ENCODE measurements at regions of chr19 and their contacts with region 1.

Region 1: GRCh38 chr19:11293433-11294389 is 2.2 kb upstream of the TSPAN16 start:
- DNase-seq: peak; percentile 37
- H3K4me3 ChIP-seq: peak overlapping the region; percentile 42
- CTCF ChIP-seq: peak; percentile 99

Region 2: DNA sequence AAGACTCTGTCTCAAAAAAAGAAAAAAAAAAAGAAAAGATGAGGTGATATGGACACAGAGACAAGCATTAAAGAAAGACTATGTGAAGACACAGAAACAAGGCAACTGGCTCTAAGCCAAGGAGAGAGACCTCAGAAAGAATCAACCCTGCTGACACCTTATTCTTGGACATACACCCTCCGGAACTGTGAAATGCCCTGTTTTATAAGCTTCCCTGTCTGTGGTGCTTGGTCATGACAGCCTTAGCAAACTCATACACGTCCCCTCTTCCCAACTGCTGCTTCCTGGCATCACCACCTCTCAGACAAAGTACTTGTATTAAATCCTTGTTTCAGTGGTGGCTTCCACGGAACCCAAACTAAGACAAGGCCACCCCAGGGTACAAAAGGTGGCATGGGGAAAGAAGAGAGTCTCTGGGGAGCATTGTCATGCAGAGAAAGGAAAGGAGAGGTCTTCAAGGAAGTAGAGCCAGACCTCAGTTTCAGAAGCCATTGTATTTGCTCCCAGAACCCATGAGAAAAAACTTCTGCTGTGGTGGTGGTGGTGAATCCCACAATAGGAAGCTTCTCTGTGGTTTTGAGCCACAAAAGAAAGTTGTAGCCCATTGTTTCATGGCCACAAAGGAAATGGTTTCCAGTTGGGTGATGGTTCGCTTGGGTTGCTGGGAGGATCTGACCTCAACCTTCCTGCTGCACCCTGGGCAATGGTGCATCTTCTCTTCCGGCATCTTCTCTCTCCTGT is 14.0 kb before region 1 on chr19:
- CTCF ChIA-PET with region 1: interaction called, 10 read pairs
- POLR2A ChIA-PET with region 1: no interaction called
- DNase-seq: no peak
- H3K4me3 ChIP-seq: no peak overlapping the region
- CTCF ChIP-seq: no peak

Region 3: GRCh38 chr19:11374433-11375142 is 80.9 kb after region 1 on chr19 and contains the start of gene SWSAP1:
- CTCF ChIA-PET with region 1: interaction called, 18 read pairs
- POLR2A ChIA-PET with region 1: no interaction called
- DNase-seq: peak; percentile 94
- H3K4me3 ChIP-seq: peak within 1 kb of the TSS; percentile 65
- CTCF ChIP-seq: no peak

Region 4: DNA sequence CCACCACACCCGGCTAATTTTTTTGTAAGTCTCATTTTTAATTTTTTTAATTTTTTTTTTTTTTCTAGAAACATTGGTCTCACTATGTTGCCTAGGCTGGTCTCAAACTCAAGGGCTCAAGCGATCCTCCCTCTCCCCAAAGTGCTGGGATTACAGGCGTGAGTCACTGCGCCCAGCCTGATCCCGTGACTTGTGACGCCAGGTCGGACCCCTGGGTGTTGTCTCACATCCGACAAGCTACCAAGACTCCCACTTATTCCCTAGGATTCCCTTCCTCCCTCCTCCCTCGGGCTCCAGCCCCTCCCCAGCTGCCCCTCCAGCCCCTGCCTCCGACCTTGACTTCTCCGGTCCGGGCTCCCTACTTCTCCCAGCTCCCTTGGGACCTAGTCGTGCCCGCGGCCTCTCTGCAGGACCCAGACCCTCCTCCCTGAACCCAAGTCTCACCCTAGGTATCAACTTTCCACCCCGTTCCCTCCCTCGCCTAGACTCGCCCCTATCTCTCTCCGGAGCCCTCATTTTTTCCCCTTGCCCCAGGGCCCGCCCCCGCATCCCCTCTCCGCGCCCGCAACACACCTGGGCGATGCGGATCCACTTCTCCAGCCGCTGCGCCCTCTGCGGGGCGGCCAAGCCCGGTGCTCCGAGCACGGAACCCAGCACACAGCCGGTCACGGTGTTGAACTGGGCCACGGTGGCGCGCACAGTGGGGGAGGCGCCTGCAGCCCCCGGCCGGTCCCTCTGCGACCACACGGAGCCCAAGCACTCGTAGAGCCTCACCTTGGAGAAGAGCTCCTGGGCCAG is 112.3 kb after region 1 on chr19:
- CTCF ChIA-PET with region 1: interaction called, 18 read pairs
- POLR2A ChIA-PET with region 1: no interaction called
- DNase-seq: no peak
- H3K4me3 ChIP-seq: no peak overlapping the region
- CTCF ChIP-seq: peak; percentile 58

Region 5: DNA sequence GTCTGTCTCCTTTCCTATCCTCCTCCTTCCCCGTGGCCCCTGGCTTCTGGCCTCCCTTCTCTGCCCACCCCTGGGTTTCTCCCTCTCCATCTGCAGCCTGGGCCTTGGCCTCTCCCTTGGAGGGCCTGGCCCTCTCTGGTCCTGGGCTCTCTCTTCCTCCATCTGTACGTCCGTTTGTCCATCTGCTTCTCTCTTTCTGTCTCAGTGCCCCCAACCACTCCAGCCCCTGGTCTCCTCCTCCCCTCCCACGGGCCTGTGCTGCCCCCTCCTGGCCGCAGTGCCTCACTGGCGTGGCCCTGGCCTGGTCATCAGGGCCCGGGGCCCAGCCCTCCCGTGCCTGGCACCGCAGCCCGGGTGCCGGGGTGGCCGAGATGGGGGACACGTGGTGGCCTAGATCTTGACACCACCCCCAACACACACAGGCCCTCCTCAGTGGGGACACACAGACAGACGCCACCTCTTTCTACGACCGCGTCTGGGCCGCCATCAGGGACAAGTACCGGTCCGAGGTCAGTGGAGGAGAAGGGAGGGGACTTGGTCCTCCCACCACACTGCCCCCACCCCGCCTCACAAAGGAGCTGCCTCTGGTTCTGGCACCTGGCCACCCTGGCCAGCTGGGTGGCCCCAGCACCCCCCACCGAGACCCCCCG is 153.1 kb after region 1 on chr19:
- CTCF ChIA-PET with region 1: interaction called, 18 read pairs
- POLR2A ChIA-PET with region 1: no interaction called
- DNase-seq: no peak
- H3K4me3 ChIP-seq: no peak overlapping the region
- CTCF ChIP-seq: peak; percentile 84

Region 6: DNA sequence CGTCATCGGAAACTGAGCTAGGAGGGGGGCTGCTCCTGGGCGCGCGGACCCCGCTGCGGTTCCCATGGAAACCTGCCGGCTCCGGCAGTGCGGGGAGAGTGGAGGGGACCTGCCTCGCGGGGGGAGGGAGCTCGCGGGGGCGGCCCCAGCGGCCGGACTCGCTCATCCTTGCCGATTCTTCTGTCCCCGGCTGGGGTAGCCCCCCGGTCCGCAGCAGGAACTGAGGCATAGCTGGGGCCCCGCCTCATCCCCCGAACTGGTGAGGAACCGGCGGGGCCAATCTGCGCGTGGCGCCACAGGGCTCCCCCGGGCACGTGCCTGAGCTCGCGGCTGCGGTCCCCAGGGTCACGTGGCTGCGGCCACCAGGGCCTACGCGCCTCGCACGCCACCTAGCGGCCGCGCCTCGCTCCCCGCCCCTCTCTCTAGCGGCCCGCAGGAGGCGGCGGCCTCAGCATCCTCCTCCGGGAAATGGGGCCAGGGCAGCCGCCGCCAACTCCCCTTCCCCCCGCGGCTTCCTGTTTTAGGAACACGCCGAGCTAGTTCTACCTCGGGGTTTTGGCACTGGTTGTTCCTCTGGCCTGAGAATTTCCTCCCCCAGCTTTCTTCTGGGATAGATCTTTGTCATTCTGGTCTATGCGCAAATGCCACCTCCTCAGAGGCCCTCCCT is 188.8 kb after region 1 on chr19:
- CTCF ChIA-PET with region 1: interaction called, 89 read pairs
- POLR2A ChIA-PET with region 1: no interaction called
- DNase-seq: peak; percentile 9
- H3K4me3 ChIP-seq: peak overlapping the region; percentile 54
- CTCF ChIP-seq: peak; percentile 98

Region 7: DNA sequence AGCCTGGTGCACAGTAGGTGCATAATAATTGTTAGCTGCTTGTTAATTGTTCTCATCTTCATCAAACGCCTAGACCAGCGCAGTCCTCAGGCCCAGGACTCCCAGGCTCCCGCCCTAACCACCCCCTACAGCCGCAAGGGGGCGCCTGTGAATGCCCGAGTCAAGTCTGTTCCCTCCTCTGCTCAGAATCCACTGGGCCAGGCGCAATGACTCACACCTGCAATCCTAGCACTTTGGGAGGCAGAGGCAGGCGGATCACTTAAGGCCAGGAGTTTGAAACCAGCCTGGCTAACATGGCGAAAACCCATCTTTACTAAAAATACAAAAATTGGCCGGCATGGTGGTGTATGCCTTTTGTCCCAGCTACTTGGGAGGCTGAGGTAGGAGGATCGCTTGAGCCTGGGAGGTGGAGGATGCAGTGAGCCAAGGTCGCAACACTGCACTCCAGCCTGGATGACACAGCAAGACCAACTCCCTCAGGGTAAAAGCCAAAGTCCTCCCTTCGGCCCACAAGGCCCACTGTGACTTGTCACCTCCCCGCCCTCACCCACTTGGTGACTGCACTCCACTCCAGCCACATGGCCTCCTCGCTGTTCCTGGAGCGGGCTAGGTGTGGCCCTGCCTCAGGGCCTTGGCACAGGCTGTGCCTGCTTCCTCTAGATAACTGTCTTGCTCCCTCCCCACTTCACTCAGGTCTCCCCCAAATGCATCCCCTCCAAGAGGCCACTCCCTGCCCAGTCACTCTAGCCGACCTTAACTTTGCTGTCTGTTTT is 202.9 kb after region 1 on chr19:
- CTCF ChIA-PET with region 1: interaction called, 11 read pairs
- POLR2A ChIA-PET with region 1: no interaction called
- DNase-seq: peak; percentile 24
- H3K4me3 ChIP-seq: no peak overlapping the region
- CTCF ChIP-seq: peak; percentile 80

Measured in AG04449 (cell line).